ACHN (cell line): ENCODE measurements at regions of chr2 and their contacts with region 1.

Region 1: DNA sequence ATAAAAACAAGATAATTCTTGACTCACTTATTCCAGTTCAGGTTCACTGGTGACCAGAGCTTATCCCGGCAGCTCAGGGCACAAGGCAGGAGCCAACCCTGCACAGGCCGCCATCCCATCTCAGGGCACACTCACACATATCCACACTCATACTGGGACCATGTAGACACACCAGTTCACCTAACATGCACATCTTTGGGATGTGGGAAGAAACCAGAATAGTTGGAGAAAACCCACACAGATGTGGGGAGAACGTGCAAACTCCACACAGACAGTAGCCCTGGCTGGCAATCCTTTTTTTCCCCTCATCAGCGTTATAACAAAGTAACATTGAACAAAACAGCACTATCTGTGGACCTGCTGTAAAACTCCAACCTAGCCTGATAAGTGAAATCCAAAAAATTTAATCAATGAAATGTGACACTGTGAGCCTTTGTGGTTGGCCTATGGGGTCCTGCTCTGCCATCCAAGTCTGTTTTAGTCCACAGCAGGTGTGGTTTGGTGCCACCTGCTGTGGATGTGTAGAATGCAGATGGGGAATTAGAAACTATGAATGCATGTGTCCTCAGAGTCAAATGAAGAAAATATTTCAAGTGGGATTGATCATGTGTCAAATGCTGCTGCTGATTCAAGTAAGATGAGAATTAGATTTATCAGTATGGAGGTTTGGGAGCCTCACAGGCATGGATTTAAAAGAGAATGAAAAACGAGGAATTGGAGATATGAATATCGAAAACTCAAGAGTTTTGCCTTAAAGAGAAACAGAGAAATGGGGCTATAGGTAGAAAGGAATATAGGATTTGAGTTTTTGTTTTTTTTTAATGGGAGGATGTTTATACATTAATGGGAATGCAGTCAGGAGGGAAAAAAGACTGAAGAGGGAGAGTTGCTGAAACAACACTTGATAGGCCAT is 47.0 kb downstream of the UGP2 start:
- DNase-seq: peak; percentile 64

Region 2: GRCh38 chr2:63698825-63699548 is 189.8 kb before region 1 on chr2:
- in situ Hi-C with region 1: loop called (anchors 25 kb)
- DNase-seq: peak; percentile 73

Region 3: GRCh38 chr2:64523666-64524603 is 635.2 kb after region 1 on chr2 and contains the start of gene AFTPH:
- in situ Hi-C with region 1: no loop called
- DNase-seq: peak; percentile 99